AG04450 (cell line): ENCODE measurements at regions of chr3 and their contacts with region 1.

Region 1: GRCh38 chr3:67647390-67647878 is 7.0 kb downstream of the SUCLG2 start:
- DNase-seq: peak; percentile 91
- H3K4me3 ChIP-seq: no peak overlapping the region
- H3K27ac ChIP-seq: peak overlapping the region; percentile 93
- H3K27me3 ChIP-seq: no peaks in the 10 kb centered on the region
- CTCF ChIP-seq: no peak

Region 2: DNA sequence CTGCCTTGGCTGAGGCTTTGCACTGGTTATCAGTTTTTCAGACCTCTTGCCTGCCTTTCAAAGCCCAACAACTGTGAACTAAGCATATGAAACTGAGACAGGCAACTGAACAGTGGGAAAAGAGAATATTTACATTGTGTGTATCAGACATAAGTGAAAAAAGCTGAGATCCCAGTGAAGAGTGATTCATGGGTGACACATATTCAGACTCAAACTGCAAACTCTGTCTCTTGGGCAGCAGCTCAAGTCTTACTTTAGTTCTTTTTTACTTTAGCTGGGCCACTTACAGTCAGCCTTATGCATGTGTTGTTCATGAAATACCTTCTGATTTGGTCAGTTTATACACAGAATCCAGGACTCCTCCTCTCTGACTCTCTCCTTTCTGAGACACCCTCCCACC is 12.2 kb before region 1 on chr3:
- CTCF ChIA-PET with region 1: interaction called, 3 read pairs
- POLR2A ChIA-PET with region 1: interaction called, 15 read pairs
- DNase-seq: peak; percentile 71
- H3K4me3 ChIP-seq: no peak overlapping the region
- H3K27ac ChIP-seq: peak overlapping the region; percentile 72
- H3K27me3 ChIP-seq: no peaks in the 10 kb centered on the region
- CTCF ChIP-seq: no peak